Calu3 (cell line): ENCODE measurements at regions of chr10 and their contacts with region 1.

Region 1: DNA sequence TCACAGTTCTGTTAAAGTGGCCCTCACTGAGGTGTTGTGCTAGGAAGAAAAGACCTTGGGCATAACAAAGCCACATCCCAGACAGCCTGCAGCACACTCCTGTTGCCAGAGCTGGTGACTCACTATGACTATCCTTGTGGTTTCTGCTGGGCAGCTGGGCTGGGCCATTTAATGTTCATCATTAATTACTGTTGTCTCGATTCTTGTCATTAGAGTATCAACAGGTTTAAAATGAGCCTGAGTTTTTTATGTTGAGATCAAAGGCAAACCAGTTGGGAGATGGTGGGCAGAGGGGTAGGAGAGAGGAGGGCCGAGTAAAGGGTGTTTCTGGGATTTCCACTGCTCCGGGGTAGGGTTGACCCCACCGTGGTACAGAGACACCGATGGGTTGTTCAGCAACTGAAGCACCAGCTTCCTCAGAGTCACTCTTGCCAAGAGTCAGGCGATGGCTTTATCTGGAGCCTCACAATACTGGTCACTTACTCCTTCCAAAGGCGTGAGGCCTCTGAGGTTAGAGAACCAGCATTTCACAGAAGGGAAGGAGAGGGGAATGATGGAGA is 128.7 kb upstream of the LYZL1 start:
- DNase-seq: peak; percentile 69
- H3K4me3 Mint-ChIP-seq: peak overlapping the region; percentile 61
- H3K27ac Mint-ChIP-seq: peak overlapping the region; percentile 97
- H3K4me1 Mint-ChIP-seq: peaks cover 62% of the 10 kb centered on the region
- H3K27me3 Mint-ChIP-seq: no peaks in the 10 kb centered on the region
- CTCF ChIP-seq: no peak

Region 2: DNA sequence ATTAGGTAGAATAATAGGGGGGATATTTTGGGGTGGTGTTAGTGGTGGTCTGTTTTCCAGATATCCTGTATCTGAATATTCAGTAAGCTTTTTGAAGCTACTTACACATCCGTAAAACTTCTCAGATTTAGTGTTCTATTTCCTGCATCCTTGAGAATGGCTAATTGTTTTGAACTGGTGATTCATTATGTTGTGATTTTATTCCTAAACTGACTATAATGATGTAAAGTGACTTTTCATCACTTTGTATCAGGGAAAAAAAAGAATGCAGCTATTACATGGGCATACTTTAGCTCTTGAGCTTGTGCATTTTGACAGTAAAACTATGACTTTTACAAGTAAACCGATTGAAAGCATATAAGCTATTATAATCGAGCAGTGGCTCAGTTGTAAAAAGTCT is 609.1 kb before region 1 on chr10:
- CTCF ChIA-PET with region 1: interaction called, 13 read pairs
- intact Hi-C with region 1: no loop called
- DNase-seq: no peak
- H3K4me3 Mint-ChIP-seq: no peak overlapping the region
- H3K27ac Mint-ChIP-seq: peak overlapping the region; percentile 44
- H3K4me1 Mint-ChIP-seq: peaks cover 69% of the 10 kb centered on the region
- H3K27me3 Mint-ChIP-seq: no peaks in the 10 kb centered on the region
- CTCF ChIP-seq: no peak

Region 3: DNA sequence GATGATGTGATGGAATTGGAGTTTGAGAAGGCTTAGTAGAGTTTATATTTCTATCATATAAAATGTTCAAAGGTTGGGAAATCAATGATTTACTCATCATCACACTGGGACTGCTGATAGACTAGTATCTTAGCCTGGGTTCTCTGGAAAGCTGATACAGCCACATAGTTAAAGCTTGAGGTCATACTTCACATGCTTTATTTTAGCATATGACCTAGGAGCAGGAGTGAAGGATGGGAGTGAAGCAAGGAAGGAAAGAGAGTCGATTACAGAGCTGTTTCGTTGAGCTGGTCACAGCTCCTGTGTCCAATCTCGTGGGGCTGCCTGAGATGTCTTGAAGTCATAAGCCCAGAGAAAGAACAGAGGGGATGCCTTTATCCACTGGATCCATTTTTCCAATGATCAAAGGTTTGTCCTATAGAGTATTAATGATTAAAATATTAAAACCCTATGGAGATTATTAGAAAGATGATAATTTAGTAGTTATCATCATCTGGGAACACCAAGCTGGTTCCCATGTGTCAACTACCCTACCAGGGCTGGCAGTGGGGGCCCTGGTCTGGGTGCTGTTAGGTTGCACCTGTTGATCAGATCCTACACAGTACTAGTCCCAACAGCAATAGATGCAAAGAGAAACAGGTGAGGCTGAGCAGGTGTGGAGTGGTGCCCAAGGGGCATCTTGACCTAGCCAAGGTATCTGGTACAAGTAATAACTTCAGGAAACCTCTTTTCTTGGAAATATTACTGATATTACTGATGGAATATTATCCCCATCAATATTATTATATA is 405.1 kb before region 1 on chr10:
- CTCF ChIA-PET with region 1: no interaction called
- intact Hi-C with region 1: no loop called
- DNase-seq: no peak
- H3K4me3 Mint-ChIP-seq: no peak overlapping the region
- H3K27ac Mint-ChIP-seq: peak overlapping the region; percentile 1
- H3K4me1 Mint-ChIP-seq: peaks cover 13% of the 10 kb centered on the region
- H3K27me3 Mint-ChIP-seq: no peaks in the 10 kb centered on the region
- CTCF ChIP-seq: no peak

Region 4: GRCh38 chr10:29141761-29142160 is 18.4 kb before region 1 on chr10:
- CTCF ChIA-PET with region 1: interaction called, 3 read pairs
- intact Hi-C with region 1: loop called (anchors 2 kb)
- DNase-seq: peak; percentile 34
- H3K4me3 Mint-ChIP-seq: no peak overlapping the region
- H3K27ac Mint-ChIP-seq: no peak overlapping the region
- H3K4me1 Mint-ChIP-seq: peaks cover 38% of the 10 kb centered on the region
- H3K27me3 Mint-ChIP-seq: no peaks in the 10 kb centered on the region
- CTCF ChIP-seq: no peak

Region 5: GRCh38 chr10:29245476-29245875 is 85.3 kb after region 1 on chr10:
- CTCF ChIA-PET with region 1: no interaction called
- intact Hi-C with region 1: no loop called
- DNase-seq: no peak
- H3K4me3 Mint-ChIP-seq: no peak overlapping the region
- H3K27ac Mint-ChIP-seq: no peak overlapping the region
- H3K4me1 Mint-ChIP-seq: no peaks in the 10 kb centered on the region
- H3K27me3 Mint-ChIP-seq: peaks cover 51% of the 10 kb centered on the region
- CTCF ChIP-seq: no peak

Region 6: DNA sequence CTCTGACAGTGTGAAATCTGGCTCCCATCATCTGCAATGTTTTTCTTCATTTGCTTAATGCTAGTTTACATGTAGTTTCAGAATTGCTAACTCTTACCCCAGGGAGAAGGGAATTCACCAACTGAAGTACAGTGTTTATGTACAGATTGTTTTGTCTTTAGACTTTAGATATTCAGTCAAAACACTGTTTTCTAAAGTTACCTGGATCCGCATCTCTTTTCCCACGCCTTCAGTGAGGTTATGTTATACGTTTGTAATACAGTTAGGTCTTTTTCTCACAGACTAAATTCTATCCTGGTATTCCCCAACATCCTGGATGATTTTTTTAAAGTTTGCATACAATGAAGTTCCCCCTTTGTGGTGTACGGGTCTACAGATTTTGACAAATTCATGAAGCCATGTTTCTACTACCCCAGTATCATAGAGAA is 125.4 kb after region 1 on chr10:
- CTCF ChIA-PET with region 1: no interaction called
- intact Hi-C with region 1: no loop called
- DNase-seq: no peak
- H3K4me3 Mint-ChIP-seq: no peak overlapping the region
- H3K27ac Mint-ChIP-seq: no peak overlapping the region
- H3K4me1 Mint-ChIP-seq: no peaks in the 10 kb centered on the region
- H3K27me3 Mint-ChIP-seq: peaks cover 27% of the 10 kb centered on the region
- CTCF ChIP-seq: no peak

Region 7: DNA sequence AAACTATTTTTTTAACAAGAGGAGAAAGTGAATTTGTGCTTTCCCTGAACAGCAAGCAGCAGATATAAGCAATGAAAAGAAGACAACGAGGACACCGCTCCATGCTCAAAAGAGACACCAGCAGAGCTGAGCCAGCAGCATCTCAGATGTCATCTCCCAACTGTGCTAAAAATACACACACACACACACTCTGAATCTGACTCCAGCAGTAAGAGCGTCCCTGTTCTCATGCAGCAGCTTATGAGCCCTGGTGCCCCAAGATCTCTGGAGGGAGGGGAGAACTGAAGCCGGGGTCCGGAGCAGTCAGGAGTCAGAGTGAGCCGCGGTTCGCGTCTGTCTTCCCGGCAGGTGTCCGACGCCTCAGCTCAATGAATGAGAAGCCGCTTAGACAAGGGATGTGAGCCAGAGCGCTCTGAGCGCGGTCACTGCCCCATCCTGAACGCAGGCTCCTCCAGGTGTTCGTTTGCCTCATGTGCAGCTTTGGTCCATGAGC is 425.3 kb after region 1 on chr10:
- CTCF ChIA-PET with region 1: no interaction called
- intact Hi-C with region 1: no loop called
- DNase-seq: no peak
- H3K4me3 Mint-ChIP-seq: no peak overlapping the region
- H3K27ac Mint-ChIP-seq: no peak overlapping the region
- H3K4me1 Mint-ChIP-seq: peaks cover 61% of the 10 kb centered on the region
- H3K27me3 Mint-ChIP-seq: no peaks in the 10 kb centered on the region
- CTCF ChIP-seq: no peak